ENCODE measurements at regions of chr3 and their contacts with region 1.

Region 1: DNA sequence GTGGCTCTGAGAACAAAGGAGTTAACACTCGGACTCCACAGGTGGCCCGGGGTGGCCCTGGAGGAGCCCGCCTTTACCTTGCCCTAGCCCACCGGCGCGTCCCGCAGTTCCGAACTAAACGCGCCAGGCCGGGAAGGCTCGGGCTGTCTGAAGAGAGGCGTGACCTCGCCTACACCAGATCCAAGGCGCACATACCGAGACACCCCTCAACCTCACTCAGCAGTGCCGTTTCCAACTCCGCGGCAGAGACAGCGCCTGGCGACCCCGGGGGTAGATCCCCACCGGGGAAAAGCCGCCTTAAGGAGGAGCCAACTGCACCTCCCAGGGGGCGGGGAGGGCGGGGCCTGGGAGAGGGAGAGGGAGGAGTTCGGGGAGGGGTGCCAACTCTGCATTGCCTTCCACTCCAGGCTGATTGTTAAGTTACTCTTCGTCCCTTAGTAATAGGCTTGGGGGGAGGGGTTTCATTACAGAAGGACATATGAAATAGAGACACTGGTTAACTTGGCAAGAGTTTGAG is at the start of gene DLG1:
- DNase-seq: peak in 4 of 9 donors; percentile 61 to 81 (median 72)
- ATAC-seq: peak; percentile 70
- H3K4me3 ChIP-seq: peak within 1 kb of the TSS; percentile 86
- H3K4me3 Mint-ChIP-seq: peak within 1 kb of the TSS; percentile 88 to 98 (median 96)
- H3K27ac ChIP-seq: peak within 1 kb of the TSS; percentile 79
- H3K27ac Mint-ChIP-seq: peak within 1 kb of the TSS; percentile 92 to 98 (median 94)
- H3K4me1 ChIP-seq: peaks cover 5 to 11% of the 10 kb centered on the region in 2 donors
- H3K4me1 Mint-ChIP-seq: peaks cover 9 to 40% (median 22%) of the 10 kb centered on the region in 7 donors
- H3K27me3 ChIP-seq: no peaks in the 10 kb centered on the region
- H3K27me3 Mint-ChIP-seq: peaks cover 0 to 35% (median 10%) of the 10 kb centered on the region in 5 donors
- total RNA-seq, gene DLG1: 79.5 to 96.5 (median 86.0) TPM

Region 2: GRCh38 chr3:196867507-196868296 is 430.7 kb before region 1 on chr3 and contains the start of gene SENP5:
- CTCF ChIA-PET with region 1: no interaction called
- POLR2A ChIA-PET with region 1: no interaction called
- intact Hi-C with region 1: loop called in 1 of 2 experiments (anchors 10 kb)
- DNase-seq: peak; percentile 79 to 92 (median 87)
- ATAC-seq: peak; percentile 99
- H3K4me3 ChIP-seq: peak within 1 kb of the TSS; percentile 86
- H3K4me3 Mint-ChIP-seq: peak within 1 kb of the TSS; percentile 90 to 99 (median 97)
- H3K27ac ChIP-seq: peak within 1 kb of the TSS; percentile 98
- H3K27ac Mint-ChIP-seq: peak within 1 kb of the TSS; percentile 90 to 99 (median 95)
- H3K4me1 ChIP-seq: peaks cover 13 to 16% of the 10 kb centered on the region in 2 donors
- H3K4me1 Mint-ChIP-seq: peaks cover 9 to 42% (median 34%) of the 10 kb centered on the region in 7 donors
- H3K27me3 ChIP-seq: no peaks in the 10 kb centered on the region
- H3K27me3 Mint-ChIP-seq: no peaks in the 10 kb centered on the region
- total RNA-seq, gene SENP5: 40.6 to 59.4 (median 43.1) TPM

Region 3: GRCh38 chr3:197256836-197257444 is 41.5 kb before region 1 on chr3:
- CTCF ChIA-PET with region 1: interaction called, 4 read pairs
- POLR2A ChIA-PET with region 1: no interaction called
- intact Hi-C with region 1: loop called (anchors 1 to 5 kb)
- DNase-seq: peak in 7 of 9 donors; percentile 24 to 63 (median 50)
- ATAC-seq: peak; percentile 48
- H3K4me3 ChIP-seq: no peak overlapping the region
- H3K4me3 Mint-ChIP-seq: no peak overlapping the region
- H3K27ac ChIP-seq: no peak overlapping the region
- H3K27ac Mint-ChIP-seq: peak overlapping the region in 1 of 9 donors; percentile 0
- H3K4me1 ChIP-seq: peaks cover 4 to 19% of the 10 kb centered on the region in 2 donors
- H3K4me1 Mint-ChIP-seq: peaks cover 32 to 92% (median 83%) of the 10 kb centered on the region in 7 donors
- H3K27me3 ChIP-seq: no peaks in the 10 kb centered on the region
- H3K27me3 Mint-ChIP-seq: no peaks in the 10 kb centered on the region

Region 4: DNA sequence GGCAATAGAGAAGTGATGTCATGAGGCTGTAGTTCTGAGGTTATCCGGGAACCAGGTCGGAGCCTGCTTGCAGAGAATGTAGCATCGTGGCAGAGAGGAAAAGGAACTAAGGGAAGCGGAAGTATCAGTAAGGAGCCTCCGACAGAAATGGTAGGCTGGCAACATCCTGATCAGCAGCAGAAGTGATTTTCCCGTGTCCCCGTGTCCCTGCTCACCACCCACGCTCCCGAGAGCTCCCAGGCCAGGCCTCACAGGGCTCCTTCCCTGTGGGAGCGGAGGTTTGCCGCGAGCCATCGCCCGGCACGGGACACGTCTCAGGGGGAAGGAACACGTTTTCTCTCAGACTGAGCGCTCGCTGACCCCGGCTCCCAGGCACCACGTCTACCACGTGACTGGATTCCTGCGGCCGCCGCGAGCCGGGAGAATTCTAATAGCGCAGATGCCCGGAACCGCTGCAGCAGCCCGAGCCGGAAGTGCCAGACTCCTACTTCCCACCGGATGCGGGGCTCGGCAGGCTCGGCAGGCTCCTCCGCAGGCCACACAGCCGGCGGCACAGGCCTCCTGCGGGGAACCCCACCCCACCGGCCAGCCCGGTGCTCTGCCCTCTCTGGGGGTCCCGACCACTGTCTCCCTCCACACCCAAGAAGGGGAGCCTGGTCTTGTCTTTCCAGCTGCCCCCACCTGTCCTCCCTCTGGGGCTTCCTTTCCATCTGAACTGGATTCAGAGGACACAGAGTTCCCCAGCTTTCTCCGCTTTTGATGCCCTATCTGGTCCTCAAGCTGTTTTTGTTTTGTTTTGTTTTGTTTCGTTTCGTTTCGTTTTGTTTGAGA is 158.1 kb after region 1 on chr3:
- CTCF ChIA-PET with region 1: no interaction called
- POLR2A ChIA-PET with region 1: no interaction called
- intact Hi-C with region 1: loop called (anchors 1 to 5 kb)
- DNase-seq: peak in 7 of 9 donors; percentile 3 to 60 (median 23)
- ATAC-seq: peak; percentile 48
- H3K4me3 ChIP-seq: peak overlapping the region; percentile 93
- H3K4me3 Mint-ChIP-seq: peak overlapping the region; percentile 87 to 97 (median 94)
- H3K27ac ChIP-seq: peak overlapping the region; percentile 65
- H3K27ac Mint-ChIP-seq: peak overlapping the region; percentile 84 to 95 (median 91)
- H3K4me1 ChIP-seq: peaks cover 0 to 9% of the 10 kb centered on the region in 2 donors
- H3K4me1 Mint-ChIP-seq: peaks cover 13 to 34% (median 23%) of the 10 kb centered on the region in 7 donors
- H3K27me3 ChIP-seq: no peaks in the 10 kb centered on the region
- H3K27me3 Mint-ChIP-seq: peaks cover 0 to 24% (median 0%) of the 10 kb centered on the region in 5 donors

Region 5: DNA sequence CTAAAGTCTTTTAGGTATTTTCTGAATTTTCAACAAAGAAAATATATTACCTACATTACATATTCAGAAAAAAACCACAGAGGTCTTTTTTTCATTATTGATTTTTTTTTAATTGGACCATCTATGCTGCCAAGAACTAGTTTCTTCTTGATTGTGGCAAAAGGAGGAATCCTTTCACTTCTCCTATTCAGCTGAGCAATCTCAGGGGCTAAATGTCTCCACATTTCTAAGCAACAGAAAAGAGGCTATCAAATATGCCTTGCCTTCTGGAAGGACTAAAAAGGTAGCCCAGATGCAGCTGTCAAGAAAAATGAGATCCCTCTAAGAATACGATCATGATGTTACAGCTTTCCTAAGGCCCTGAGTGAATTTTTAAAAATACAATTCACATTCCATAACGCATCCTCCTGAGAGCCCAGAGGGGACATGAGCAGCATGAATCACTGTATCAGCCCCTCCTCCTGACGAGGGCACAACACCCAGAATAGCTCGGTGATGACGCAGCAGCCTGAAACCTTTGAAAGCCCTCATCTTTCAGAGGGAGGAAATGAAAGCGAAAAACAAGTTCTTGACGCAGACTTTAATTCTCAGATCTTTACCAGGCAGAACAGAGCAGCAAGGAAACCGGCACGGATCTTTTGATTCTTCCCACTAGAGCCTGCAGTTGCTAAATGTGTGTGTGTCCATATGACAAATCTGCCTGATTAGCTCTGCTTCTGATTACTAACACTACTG is 413.7 kb after region 1 on chr3:
- CTCF ChIA-PET with region 1: no interaction called
- POLR2A ChIA-PET with region 1: no interaction called
- intact Hi-C with region 1: loop called in 1 of 2 experiments (anchors 2 kb)
- DNase-seq: peak; percentile 56 to 95 (median 91)
- ATAC-seq: peak; percentile 99
- H3K4me3 ChIP-seq: peak overlapping the region; percentile 58
- H3K4me3 Mint-ChIP-seq: peak overlapping the region; percentile 65 to 92 (median 80)
- H3K27ac ChIP-seq: peak overlapping the region; percentile 82
- H3K27ac Mint-ChIP-seq: peak overlapping the region; percentile 91 to 99 (median 97)
- H3K4me1 ChIP-seq: peaks cover 14 to 15% of the 10 kb centered on the region in 2 donors
- H3K4me1 Mint-ChIP-seq: peaks cover 7 to 37% (median 26%) of the 10 kb centered on the region in 7 donors
- H3K27me3 ChIP-seq: no peaks in the 10 kb centered on the region
- H3K27me3 Mint-ChIP-seq: no peaks in the 10 kb centered on the region

Region 6: DNA sequence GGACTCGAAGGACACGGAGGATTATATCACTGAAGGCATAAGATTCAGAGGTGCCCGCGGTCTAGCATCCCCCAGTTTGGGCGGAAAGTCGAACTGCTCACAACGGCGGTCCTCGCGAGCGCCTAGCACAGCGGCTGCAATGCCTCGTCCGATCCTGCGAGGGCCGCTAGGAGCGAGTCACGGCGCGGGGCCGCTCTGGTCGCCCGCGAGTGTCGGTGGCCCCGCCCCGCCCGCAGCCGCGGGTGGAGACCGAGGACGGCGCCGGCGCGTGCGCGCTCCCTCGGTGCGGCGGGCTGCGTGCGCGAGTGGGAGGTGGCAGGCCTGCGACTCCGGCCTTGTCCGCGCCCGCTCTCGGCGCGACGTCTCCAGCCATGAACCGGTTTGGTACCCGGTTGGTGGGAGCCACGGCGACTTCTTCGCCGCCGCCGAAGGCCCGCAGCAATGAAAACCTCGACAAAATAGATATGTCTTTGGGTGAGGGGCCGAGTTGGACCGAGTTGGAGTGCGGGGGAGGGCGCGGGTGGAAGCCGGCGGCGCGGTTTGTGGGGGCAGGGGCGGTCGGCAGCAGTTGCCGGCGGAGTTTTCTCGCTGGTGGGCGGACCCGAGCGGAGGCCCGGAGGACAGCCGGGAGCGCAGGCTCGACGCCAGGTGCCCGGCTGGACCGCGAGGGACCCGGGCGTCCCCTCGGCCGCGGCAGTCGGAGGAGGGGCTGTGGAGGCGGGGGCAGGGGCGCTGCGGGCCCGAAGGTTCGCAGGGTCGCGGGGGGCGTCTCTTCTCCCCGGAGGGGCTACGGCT is 451.4 kb after region 1 on chr3 and contains the start of gene FYTTD1:
- CTCF ChIA-PET with region 1: no interaction called
- POLR2A ChIA-PET with region 1: no interaction called
- intact Hi-C with region 1: loop called in 1 of 2 experiments (anchors 1 kb)
- DNase-seq: peak; percentile 79 to 93 (median 88)
- ATAC-seq: peak; percentile 89
- H3K4me3 ChIP-seq: peak within 1 kb of the TSS; percentile 85
- H3K4me3 Mint-ChIP-seq: peak within 1 kb of the TSS; percentile 95 to 100 (median 98)
- H3K27ac ChIP-seq: peak within 1 kb of the TSS; percentile 94
- H3K27ac Mint-ChIP-seq: peak within 1 kb of the TSS; percentile 95 to 100 (median 99)
- H3K4me1 ChIP-seq: peaks cover 11 to 32% of the 10 kb centered on the region in 2 donors
- H3K4me1 Mint-ChIP-seq: peaks cover 27 to 61% (median 52%) of the 10 kb centered on the region in 7 donors
- H3K27me3 ChIP-seq: no peaks in the 10 kb centered on the region
- H3K27me3 Mint-ChIP-seq: no peaks in the 10 kb centered on the region
- total RNA-seq, gene FYTTD1: 45.6 to 63.4 (median 58.0) TPM